Adrenal gland (tissue), 19 donors: ENCODE measurements at regions of chr5 and their contacts with region 1.

Region 1: DNA sequence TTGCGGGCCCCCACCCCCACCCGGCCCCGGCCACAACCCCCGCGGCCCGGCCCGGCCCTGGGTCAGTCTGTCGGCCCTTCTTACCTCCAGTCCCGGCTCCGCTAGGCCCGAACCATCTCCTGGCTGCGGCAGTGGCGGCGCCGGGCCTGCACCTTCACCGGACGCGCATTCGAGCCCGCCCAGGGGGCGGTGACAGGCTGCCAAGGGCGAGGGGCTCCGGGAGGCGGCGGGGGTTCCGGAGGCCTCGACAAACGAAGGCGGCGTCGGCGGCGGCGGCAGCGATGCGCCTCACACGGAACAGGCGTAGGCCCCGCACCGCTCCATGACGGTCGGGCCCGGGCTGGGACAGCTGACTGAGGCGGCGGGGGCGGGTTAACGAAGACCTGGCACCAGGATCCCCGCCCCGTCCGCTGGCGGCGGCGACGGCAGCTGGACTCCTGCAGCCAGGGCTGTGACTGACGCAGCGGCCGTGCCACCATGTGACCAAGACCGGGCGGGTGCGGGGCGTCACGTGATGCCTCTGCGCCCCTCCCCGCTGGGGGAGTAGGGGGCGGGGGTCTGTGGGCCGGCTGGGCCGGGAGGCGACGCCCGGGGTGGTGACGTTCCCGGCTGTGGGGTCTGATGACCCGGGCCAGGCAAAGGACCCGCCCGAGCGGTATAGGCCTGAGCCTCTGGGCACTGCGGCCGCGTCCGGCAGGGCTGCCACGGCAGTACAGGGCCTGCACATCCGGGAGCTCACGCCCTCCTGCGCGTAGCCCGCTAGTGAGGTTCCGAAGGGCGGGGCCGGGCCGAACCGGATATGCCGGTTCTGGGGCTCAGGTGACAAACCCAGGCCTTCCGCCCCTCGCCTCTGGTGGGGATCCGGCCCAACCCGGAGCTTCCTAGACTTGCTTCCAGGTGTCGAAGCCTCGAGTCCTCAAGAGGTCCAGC is at the start of gene AFF4:
- DNase-seq: peak; percentile 97 to 99 (median 98)
- H3K4me3 ChIP-seq: peak within 1 kb of the TSS; percentile 81 to 96 (median 94)
- H3K27ac ChIP-seq: peak within 1 kb of the TSS; percentile 90 to 100 (median 100)
- H3K4me1 ChIP-seq: peaks cover 19 to 28% of the 10 kb centered on the region in 2 donors
- H3K27me3 ChIP-seq: no peaks in the 10 kb centered on the region
- CTCF ChIP-seq: peak in 2 of 6 experiments; percentile 5
- POLR2A ChIP-seq: peak; percentile 98 to 100
- total RNA-seq, gene AFF4: 42.5 to 158 (median 91.0) TPM

Region 2: GRCh38 chr5:133051580-133052332 is 88.3 kb after region 1 on chr5 and contains the start of gene HSPA4:
- intact Hi-C with region 1: loop called (anchors 10 kb)
- DNase-seq: peak; percentile 97 to 99 (median 99)
- H3K4me3 ChIP-seq: peak within 1 kb of the TSS; percentile 43 to 93 (median 78)
- H3K27ac ChIP-seq: peak within 1 kb of the TSS; percentile 94 to 100 (median 97)
- H3K4me1 ChIP-seq: peaks cover 10 to 54% of the 10 kb centered on the region in 2 donors
- H3K27me3 ChIP-seq: no peaks in the 10 kb centered on the region
- CTCF ChIP-seq: peak in 2 of 6 experiments; percentile 4 to 14
- POLR2A ChIP-seq: peak; percentile 95 to 98
- total RNA-seq, gene HSPA4: 48.0 to 141 (median 81.8) TPM